Right ventricle myocardium inferior (tissue), 1 donor: ENCODE measurements at regions of chr16 and their contacts with region 1.

Region 1: DNA sequence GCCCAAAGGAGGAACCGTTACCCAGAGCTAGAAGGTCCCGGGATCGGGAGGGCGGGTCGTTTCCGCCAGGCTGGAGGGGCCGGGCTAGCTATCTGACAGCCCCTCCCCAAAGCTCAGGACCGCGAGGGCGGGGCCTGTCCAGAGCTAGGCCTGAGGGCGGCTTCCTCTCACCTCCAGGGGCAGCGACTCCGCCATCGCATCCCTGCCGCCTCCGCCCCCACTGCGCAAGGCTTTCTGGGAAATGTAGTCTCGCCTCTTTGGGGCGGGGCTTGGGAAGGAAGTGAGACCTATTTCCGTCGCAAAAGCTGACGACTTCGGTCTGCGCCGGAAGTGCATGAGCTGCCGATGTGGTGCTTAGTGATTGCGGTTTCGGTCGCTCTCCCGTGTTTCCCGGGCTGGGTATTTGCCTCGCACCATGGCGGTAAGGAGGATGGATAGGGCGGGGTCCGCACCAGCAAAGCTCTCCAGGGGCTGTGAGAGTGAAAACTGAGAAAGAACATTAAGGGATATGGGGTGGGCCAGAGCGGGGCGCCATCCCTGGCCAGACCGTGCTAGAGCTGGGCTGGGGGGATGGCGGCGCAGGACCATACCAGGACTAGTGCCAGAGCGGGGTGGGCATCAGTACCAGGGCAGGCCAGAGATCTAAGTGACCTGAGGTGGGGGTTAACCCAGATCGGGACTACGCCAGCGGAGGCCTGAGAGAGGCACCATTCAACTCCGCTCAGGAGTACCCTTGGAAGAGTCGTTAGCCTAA is at the start of gene TMEM208:
- DNase-seq: peak; percentile 99
- ATAC-seq: peak; percentile 97
- total RNA-seq, gene TMEM208: 12.5 TPM

Region 2: DNA sequence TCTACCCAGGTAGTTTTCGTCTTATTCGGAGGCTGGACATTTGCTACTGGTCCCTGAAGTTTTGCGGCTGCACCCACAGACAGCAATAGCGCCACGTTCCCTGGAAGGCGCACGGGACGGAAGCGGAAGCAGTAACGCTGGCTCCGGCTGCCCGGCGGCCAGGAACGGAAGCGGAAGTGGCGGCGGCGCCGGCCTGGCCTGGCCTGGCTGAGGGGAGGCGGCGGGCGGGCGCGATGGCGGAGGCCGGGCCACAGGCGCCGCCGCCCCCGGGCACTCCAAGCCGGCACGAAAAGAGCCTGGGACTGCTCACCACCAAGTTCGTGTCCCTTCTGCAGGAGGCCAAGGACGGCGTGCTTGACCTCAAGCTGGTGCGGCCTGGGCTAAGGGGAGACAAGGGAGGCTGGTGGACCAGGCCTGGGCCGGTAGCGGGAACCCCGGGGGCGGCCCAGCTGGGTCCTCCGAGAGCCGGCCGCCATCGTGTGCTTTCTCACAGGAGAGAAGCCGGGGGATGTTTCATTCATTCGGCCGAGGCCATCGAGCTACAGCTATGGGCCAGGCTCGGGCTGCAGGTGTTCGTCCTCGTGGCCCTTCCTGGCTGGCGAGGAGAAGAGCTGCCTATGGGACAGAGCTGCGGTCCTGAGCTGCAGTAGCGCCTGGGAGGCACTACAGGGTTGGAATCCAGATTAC is 34.8 kb before region 1 on chr16 and contains the start of gene E2F4:
- intact Hi-C with region 1: loop called (anchors 1 kb)
- DNase-seq: peak; percentile 97
- ATAC-seq: peak; percentile 94
- total RNA-seq, gene E2F4: 36.9 TPM

Region 3: GRCh38 chr16:67244387-67245185 is 17.6 kb after region 1 on chr16:
- intact Hi-C with region 1: loop called (anchors 1 kb)
- DNase-seq: peak; percentile 85
- ATAC-seq: peak; percentile 32